ENCODE measurements at regions of chr12 and their contacts with region 1.

Region 1: GRCh38 chr12:122078141-122079032 is at the start of gene MLXIP:
- DNase-seq: peak; percentile 95
- ATAC-seq: peak; percentile 77
- H3K4me3 ChIP-seq: peak within 1 kb of the TSS; percentile 63 to 88 (median 78)
- H3K4me3 Mint-ChIP-seq: peak within 1 kb of the TSS; percentile 92
- H3K27ac ChIP-seq: peak within 1 kb of the TSS; percentile 14 to 74
- H3K27ac Mint-ChIP-seq: peak within 1 kb of the TSS; percentile 86
- H3K4me1 ChIP-seq: peaks cover 55 to 66% of the 10 kb centered on the region in 2 donors
- H3K4me1 Mint-ChIP-seq: peaks cover 55% of the 10 kb centered on the region
- H3K27me3 ChIP-seq: no peaks in the 10 kb centered on the region
- H3K27me3 Mint-ChIP-seq: no peaks in the 10 kb centered on the region
- CTCF ChIP-seq: no peak
- total RNA-seq, gene MLXIP: 91.2 and 94.5 TPM in 2 replicates

Region 2: DNA sequence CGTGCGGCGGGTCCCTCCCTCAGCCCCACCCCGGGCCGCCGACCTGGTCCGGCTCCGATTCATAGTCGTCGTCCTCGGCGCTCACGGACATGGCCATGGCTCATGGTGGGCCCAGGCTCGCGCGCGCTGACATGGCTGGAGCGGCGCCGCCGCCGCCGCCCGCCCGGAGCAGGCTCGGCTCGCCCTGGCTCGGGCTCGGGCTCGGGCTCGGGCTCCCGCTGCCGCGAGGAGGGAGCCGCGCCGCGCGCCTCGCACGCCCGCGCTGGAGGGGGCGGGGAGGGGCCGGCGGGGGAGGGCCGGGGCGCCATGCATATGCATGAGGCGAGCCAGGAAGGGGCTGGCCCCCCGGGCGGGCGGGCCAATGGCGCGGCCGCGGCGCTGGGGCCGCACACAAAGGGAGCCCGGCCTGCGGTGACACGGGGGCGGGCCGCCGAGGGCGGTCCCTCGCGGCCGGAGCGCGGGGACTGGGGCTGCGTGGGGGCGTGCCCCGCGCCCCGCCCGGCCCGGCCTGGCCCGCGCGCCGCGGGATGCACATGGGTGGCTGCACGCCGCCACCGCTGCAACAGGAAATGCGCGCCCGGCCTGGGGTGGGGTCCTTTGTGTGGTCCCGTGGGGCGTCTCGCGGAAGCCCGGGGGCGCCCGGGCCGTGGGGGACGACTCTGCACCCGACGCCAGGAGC is 611.1 kb before region 1 on chr12:
- CTCF ChIA-PET with region 1: no interaction called
- POLR2A ChIA-PET with region 1: no interaction called
- intact Hi-C with region 1: loop called (anchors 2 kb)
- DNase-seq: peak; percentile 94
- ATAC-seq: peak; percentile 85
- H3K4me3 ChIP-seq: peak overlapping the region in 4 of 5 experiments; percentile 56 to 82 (median 76)
- H3K4me3 Mint-ChIP-seq: peak overlapping the region; percentile 49
- H3K27ac ChIP-seq: peak overlapping the region; percentile 62 to 82
- H3K27ac Mint-ChIP-seq: peak overlapping the region; percentile 86
- H3K4me1 ChIP-seq: peaks cover 23 to 49% of the 10 kb centered on the region in 2 donors
- H3K4me1 Mint-ChIP-seq: peaks cover 59% of the 10 kb centered on the region
- H3K27me3 ChIP-seq: no peaks in the 10 kb centered on the region
- H3K27me3 Mint-ChIP-seq: no peaks in the 10 kb centered on the region
- CTCF ChIP-seq: no peak

Region 3: DNA sequence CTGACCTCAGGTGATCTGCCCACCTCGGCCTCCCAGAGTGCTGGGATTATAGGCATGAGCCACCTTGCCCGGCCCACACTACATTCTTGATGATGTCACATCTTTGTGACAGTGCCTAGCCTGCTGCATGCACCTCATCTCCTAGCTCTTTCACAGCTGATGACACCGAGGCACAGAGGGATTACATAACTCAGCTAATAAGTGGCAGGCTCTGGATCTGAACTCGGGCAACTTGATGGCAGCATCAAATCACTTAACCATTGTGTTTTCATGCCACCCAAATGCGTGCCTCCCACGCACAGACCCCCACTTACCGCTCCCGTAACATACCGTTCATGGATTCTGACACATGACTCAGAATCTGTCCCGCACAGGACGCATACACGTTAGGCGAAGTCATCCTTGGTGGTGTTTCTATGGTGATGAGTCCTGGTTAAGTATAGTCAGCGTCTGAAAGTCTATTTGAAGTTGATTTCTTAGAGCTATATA is 358.4 kb before region 1 on chr12:
- CTCF ChIA-PET with region 1: no interaction called
- POLR2A ChIA-PET with region 1: no interaction called
- intact Hi-C with region 1: no loop called
- DNase-seq: no peak
- ATAC-seq: no peak
- H3K4me3 ChIP-seq: no peak overlapping the region
- H3K4me3 Mint-ChIP-seq: no peak overlapping the region
- H3K27ac ChIP-seq: no peak overlapping the region
- H3K27ac Mint-ChIP-seq: no peak overlapping the region
- H3K4me1 ChIP-seq: no peaks in the 10 kb centered on the region
- H3K4me1 Mint-ChIP-seq: no peaks in the 10 kb centered on the region
- H3K27me3 ChIP-seq: no peaks in the 10 kb centered on the region
- H3K27me3 Mint-ChIP-seq: no peaks in the 10 kb centered on the region
- CTCF ChIP-seq: no peak

Region 4: GRCh38 chr12:121888478-121889266 is 189.7 kb before region 1 on chr12 and contains the start of gene PSMD9:
- CTCF ChIA-PET with region 1: no interaction called
- POLR2A ChIA-PET with region 1: no interaction called
- intact Hi-C with region 1: loop called (anchors 1 kb)
- DNase-seq: peak; percentile 98
- ATAC-seq: peak; percentile 96
- H3K4me3 ChIP-seq: peak within 1 kb of the TSS; percentile 70 to 92 (median 78)
- H3K4me3 Mint-ChIP-seq: peak within 1 kb of the TSS; percentile 99
- H3K27ac ChIP-seq: peak within 1 kb of the TSS; percentile 86 to 95
- H3K27ac Mint-ChIP-seq: peak within 1 kb of the TSS; percentile 99
- H3K4me1 ChIP-seq: peaks cover 15 to 19% of the 10 kb centered on the region in 2 donors
- H3K4me1 Mint-ChIP-seq: peaks cover 32% of the 10 kb centered on the region
- H3K27me3 ChIP-seq: peaks cover 0 to 5% (median 0%) of the 10 kb centered on the region in 4 experiments
- H3K27me3 Mint-ChIP-seq: no peaks in the 10 kb centered on the region
- CTCF ChIP-seq: peak; percentile 68
- total RNA-seq, gene PSMD9: 37.1 and 38.2 TPM in 2 replicates

Region 5: GRCh38 chr12:122021822-122022526 is 56.4 kb before region 1 on chr12 and contains the start of gene BCL7A:
- CTCF ChIA-PET with region 1: interaction called, 3 read pairs
- POLR2A ChIA-PET with region 1: interaction called, 4 read pairs
- intact Hi-C with region 1: loop called (anchors 5 kb)
- DNase-seq: peak; percentile 90
- ATAC-seq: peak; percentile 73
- H3K4me3 ChIP-seq: peak within 1 kb of the TSS; percentile 26 to 86 (median 78)
- H3K4me3 Mint-ChIP-seq: peak within 1 kb of the TSS; percentile 94
- H3K27ac ChIP-seq: peak within 1 kb of the TSS; percentile 67 to 80
- H3K27ac Mint-ChIP-seq: peak within 1 kb of the TSS; percentile 98
- H3K4me1 ChIP-seq: peaks cover 32 to 51% of the 10 kb centered on the region in 2 donors
- H3K4me1 Mint-ChIP-seq: peaks cover 38% of the 10 kb centered on the region
- H3K27me3 ChIP-seq: no peaks in the 10 kb centered on the region
- H3K27me3 Mint-ChIP-seq: no peaks in the 10 kb centered on the region
- CTCF ChIP-seq: no peak
- total RNA-seq, gene BCL7A: 75.6 and 75.9 TPM in 2 replicates

Region 6: DNA sequence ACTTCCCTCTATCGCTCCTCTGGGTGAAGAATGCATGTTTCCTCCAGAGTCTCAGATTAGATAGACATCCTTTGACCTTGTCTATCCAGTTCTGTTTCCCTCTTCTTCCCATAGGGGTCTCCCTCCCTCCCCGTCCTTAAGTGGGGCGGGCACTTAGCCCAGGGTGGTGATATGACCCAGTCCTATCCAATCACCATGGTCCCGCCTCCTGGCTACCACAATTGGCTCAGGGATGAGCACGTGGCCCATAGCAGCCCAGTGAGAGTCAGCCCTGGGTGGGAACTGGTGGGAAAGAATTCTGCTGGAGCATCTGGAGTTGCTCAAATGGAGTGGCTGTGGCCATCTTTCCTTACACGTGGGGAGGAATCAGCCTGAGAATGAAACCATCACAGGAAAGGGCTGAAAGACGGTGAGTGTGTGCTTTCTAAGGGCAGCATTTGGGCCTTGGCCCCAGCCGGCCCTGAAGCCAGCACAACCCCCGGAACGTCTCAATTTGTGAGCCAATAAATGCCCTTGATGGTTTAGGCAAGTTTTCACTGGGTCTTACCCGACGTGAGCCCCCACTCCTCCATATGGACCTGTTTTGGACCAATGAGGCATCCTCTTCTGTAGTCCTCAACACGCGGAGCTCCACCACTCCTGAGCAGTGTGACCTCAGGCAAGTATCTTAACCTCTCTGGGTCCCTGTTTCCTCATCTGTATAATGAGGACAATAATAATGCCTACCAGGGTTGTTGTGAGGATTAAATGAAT is 14.2 kb before region 1 on chr12:
- CTCF ChIA-PET with region 1: interaction called, 17 read pairs
- POLR2A ChIA-PET with region 1: interaction called, 23 read pairs
- intact Hi-C with region 1: loop called (anchors 1 kb)
- DNase-seq: peak; percentile 58
- ATAC-seq: peak; percentile 66
- H3K4me3 ChIP-seq: no peak overlapping the region
- H3K4me3 Mint-ChIP-seq: no peak overlapping the region
- H3K27ac ChIP-seq: no peak overlapping the region
- H3K27ac Mint-ChIP-seq: peak overlapping the region; percentile 65
- H3K4me1 ChIP-seq: peaks cover 30 to 49% of the 10 kb centered on the region in 2 donors
- H3K4me1 Mint-ChIP-seq: peaks cover 47% of the 10 kb centered on the region
- H3K27me3 ChIP-seq: no peaks in the 10 kb centered on the region
- H3K27me3 Mint-ChIP-seq: no peaks in the 10 kb centered on the region
- CTCF ChIP-seq: no peak

Region 7: GRCh38 chr12:122225683-122226407 is 147.5 kb after region 1 on chr12 and contains the start of gene DIABLO:
- CTCF ChIA-PET with region 1: no interaction called
- POLR2A ChIA-PET with region 1: no interaction called
- intact Hi-C with region 1: loop called (anchors 1 kb)
- DNase-seq: peak; percentile 100
- ATAC-seq: peak; percentile 93
- H3K4me3 ChIP-seq: peak within 1 kb of the TSS; percentile 51 to 98 (median 90)
- H3K4me3 Mint-ChIP-seq: peak within 1 kb of the TSS; percentile 94
- H3K27ac ChIP-seq: peak within 1 kb of the TSS; percentile 94 to 97
- H3K27ac Mint-ChIP-seq: peak within 1 kb of the TSS; percentile 96
- H3K4me1 ChIP-seq: peaks cover 19 to 21% of the 10 kb centered on the region in 2 donors
- H3K4me1 Mint-ChIP-seq: peaks cover 34% of the 10 kb centered on the region
- H3K27me3 ChIP-seq: no peaks in the 10 kb centered on the region
- H3K27me3 Mint-ChIP-seq: no peaks in the 10 kb centered on the region
- CTCF ChIP-seq: no peak
- total RNA-seq, gene DIABLO: 42.8 and 44.6 TPM in 2 replicates

Region 8: DNA sequence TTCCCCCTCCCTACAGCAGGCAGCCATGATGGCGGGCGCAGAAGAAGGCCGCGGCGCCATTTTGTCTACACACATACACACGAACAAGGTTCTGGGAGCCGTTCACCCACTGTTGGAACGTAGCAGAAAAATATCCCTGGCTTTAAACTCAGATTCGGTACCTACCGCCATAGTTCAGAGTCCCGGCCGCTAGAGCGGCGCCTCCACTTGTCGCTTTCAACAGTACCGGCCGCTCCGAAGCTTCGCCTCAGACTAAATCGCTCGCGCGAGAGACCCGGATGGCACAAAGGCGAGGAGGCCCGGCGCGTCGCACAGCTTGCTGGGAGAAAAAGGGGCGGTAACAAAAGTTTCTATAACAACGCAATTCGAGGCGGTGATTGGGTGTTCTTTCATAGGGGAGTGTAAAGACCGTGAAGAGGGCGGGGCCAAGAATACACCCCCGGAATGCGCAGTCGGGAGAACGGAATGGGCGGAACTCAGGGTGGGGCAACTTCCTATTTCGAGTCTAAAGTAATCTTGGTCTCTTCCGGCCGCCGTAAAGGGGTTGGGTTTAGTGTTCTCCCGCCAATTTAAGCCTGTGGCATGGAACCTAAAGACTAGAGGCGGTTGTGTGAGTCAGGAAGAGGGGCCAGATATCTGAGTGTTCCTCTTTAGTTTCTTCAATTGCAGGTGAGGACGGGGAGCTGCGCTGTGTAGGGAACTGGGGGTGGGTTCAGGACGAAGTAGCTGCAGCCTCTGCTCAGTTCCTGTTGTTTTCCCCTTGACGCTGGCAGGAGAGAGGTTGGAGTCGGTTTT is 448.5 kb after region 1 on chr12 and contains the starts of genes KNTC1 and RSRC2:
- CTCF ChIA-PET with region 1: no interaction called
- POLR2A ChIA-PET with region 1: no interaction called
- intact Hi-C with region 1: no loop called
- DNase-seq: peak; percentile 99
- ATAC-seq: peak; percentile 92
- H3K4me3 ChIP-seq: peak within 1 kb of the TSS; percentile 69 to 99 (median 97)
- H3K4me3 Mint-ChIP-seq: no peak within 1 kb of the TSS
- H3K27ac ChIP-seq: peak within 1 kb of the TSS; percentile 90 to 97
- H3K27ac Mint-ChIP-seq: no peak within 1 kb of the TSS
- H3K4me1 ChIP-seq: peaks cover 42% of the 10 kb centered on the region in 2 donors
- H3K4me1 Mint-ChIP-seq: peaks cover 35% of the 10 kb centered on the region
- H3K27me3 ChIP-seq: no peaks in the 10 kb centered on the region
- H3K27me3 Mint-ChIP-seq: no peaks in the 10 kb centered on the region
- CTCF ChIP-seq: no peak
- total RNA-seq, gene KNTC1: 49.0 and 52.4 TPM in 2 replicates
- total RNA-seq, gene RSRC2: 151 and 155 TPM in 2 replicates